BJ (cell line): ENCODE measurements at regions of chr1 and their contacts with region 1.

Region 1: GRCh38 chr1:31182352-31182751 is 57.3 kb downstream of the NKAIN1 start:
- DNase-seq: peak; percentile 51
- H3K4me3 ChIP-seq: 0 out of 2 replicates have a peak overlapping the region, but pooled peaks have one; percentile 7
- H3K27me3 ChIP-seq: peaks cover 16% of the 10 kb centered on the region
- CTCF ChIP-seq: peak; percentile 60

Region 2: GRCh38 chr1:30664103-30664755 is 518.1 kb before region 1 on chr1:
- CTCF ChIA-PET with region 1: no interaction called
- POLR2A ChIA-PET with region 1: no interaction called
- DNase-seq: no peak
- H3K4me3 ChIP-seq: no peak overlapping the region
- H3K27me3 ChIP-seq: peaks cover 5% of the 10 kb centered on the region
- CTCF ChIP-seq: no peak

Region 3: GRCh38 chr1:31170486-31170735 is 11.9 kb before region 1 on chr1:
- CTCF ChIA-PET with region 1: interaction called, 73 read pairs
- POLR2A ChIA-PET with region 1: no interaction called
- DNase-seq: no peak
- H3K4me3 ChIP-seq: no peak overlapping the region
- H3K27me3 ChIP-seq: no peaks in the 10 kb centered on the region
- CTCF ChIP-seq: no peak

Region 4: DNA sequence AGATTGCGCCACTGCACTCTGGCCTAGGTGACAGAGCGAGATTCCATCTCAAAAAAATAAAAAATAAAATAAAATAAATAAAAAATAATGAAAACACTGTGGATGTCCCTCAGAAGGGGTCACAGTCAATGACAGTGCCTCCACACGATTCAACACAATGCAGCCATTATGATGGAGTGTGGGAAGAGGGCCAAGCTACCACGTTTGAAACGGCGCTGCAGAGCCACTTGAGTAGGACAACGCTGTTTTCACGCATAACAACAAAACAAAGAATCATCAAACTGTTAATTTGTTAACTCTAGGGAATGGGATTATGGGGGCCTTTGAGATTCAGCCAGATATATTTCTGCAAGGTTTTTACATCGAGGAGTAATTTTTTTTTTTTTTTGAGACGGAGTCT is 20.9 kb after region 1 on chr1:
- CTCF ChIA-PET with region 1: interaction called, 11 read pairs
- POLR2A ChIA-PET with region 1: no interaction called
- DNase-seq: no peak
- H3K4me3 ChIP-seq: no peak overlapping the region
- H3K27me3 ChIP-seq: peaks cover 5% of the 10 kb centered on the region
- CTCF ChIP-seq: no peak

Region 5: DNA sequence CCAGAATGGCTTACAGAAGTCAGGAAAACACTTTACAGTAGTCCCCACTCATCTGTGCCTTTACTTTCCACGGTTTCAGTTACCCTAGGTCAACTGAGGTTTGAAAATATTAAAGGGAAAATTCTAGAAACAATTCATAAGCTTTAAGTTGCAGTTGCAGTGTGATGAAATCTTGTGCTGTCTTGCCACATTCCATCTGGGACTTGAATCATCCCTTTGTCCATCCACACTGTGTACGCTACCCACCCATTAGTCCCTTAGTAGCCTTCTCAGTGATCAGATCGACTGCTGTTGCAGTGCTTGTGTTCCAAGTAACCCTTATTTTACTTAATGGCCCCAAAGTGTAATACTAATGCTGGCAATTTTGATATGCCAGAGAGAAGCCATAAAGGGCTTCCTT is 145.0 kb after region 1 on chr1:
- CTCF ChIA-PET with region 1: interaction called, 20 read pairs
- POLR2A ChIA-PET with region 1: no interaction called
- DNase-seq: no peak
- H3K4me3 ChIP-seq: no peak overlapping the region
- H3K27me3 ChIP-seq: no peaks in the 10 kb centered on the region
- CTCF ChIP-seq: no peak

Region 6: DNA sequence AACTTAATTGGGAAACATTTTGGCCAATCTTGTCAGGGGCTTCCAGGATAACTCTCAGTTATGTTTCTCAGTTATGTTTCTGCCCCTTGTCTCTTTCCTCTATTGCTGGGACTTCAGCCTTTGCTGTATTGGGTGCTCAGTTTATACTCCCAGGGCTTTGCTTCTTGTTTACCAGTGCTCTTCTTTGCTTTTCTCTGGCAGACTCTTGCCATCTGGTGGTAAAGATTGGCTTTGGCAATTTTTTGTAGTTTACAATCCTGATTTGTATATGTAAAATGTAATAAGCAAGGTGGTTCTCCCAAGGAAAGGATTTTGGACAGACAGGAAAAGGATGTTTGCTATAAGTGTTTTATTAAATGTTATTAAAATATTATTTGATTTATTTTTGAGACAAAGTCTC is 152.7 kb after region 1 on chr1:
- CTCF ChIA-PET with region 1: interaction called, 34 read pairs
- POLR2A ChIA-PET with region 1: no interaction called
- DNase-seq: peak; percentile 8
- H3K4me3 ChIP-seq: no peak overlapping the region
- H3K27me3 ChIP-seq: no peaks in the 10 kb centered on the region
- CTCF ChIP-seq: peak; percentile 67

Region 7: GRCh38 chr1:31422505-31423319 is 240.4 kb after region 1 on chr1:
- CTCF ChIA-PET with region 1: interaction called, 55 read pairs
- POLR2A ChIA-PET with region 1: no interaction called
- DNase-seq: peak; percentile 31
- H3K4me3 ChIP-seq: no peak overlapping the region
- H3K27me3 ChIP-seq: no peaks in the 10 kb centered on the region
- CTCF ChIP-seq: peak; percentile 95